GM10248 (cell line): ENCODE measurements at regions of chr22 and their contacts with region 1.

Region 1: DNA sequence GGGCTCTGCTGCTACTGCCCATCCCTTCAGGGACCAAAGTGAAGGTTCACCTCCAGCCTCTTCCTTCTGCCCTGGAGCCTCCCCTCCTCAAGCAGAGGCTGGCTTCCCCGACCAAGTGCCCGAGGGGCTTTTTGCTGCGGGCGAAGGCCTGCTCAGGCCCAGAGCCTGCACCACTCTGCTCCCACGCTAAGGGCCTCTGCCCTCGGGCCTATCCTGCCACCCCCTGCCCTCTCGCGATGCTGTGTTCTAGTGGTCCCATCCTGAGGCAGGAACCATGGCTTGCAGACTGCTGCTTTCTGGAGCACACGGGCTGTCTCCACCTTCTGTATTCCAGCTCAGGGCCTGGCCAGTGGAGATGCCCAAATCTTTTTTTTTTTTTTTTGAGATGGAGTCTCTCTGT is 8.9 kb upstream of the TNFRSF13C start:
- DNase-seq: no peak
- CTCF ChIP-seq: no peak

Region 2: GRCh38 chr22:41919357-41920224 is 15.9 kb before region 1 on chr22:
- CTCF ChIA-PET with region 1: interaction called, 229 read pairs
- POLR2A ChIA-PET with region 1: interaction called, 118 read pairs
- DNase-seq: peak; percentile 87
- CTCF ChIP-seq: no peak

Region 3: DNA sequence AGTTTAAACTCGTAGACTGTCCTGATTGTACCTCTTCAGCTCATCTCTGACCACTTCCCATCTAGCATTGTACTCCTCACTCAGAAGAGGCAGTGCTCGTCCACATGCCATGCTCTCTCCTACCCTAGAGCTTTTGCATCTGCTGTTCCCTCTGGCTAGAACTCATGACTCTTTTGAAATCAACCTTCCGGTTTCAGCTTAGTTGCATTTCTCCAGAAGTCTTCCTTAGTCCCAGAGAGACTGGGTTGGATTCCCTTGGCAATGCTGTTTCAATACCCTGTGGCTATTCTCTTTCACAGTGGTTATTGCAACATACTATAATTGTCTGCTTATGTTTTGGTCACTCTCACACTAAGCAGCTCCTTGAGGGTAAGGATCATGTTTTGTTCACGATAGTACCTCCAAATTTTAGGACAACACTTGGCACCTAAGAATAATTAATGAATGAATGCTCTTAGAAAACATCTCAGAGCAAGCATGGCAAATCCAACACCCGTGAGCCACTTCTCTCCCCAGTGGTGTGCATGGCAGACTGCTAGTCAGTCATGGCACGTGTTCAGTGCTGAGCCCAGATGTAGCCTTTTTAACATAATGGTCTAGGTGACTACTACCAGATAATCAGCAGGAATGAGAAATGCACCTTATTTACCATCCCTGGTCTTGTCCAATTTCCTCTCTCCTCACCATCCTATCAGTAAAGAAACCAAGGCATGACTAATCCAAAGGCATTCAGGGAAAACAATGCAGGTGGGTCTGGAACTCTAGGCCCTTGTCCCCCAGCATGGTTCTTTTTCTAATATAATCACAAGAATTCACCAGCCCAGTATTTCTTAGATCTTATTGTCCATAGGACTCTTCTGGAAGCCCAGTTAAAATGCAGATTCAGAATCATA is 48.2 kb after region 1 on chr22:
- CTCF ChIA-PET with region 1: no interaction called
- POLR2A ChIA-PET with region 1: no interaction called
- DNase-seq: no peak
- CTCF ChIP-seq: no peak